H1 (cell line): ENCODE measurements at regions of chr3 and their contacts with region 1.

Region 1: GRCh38 chr3:36868614-36869436 is 76.0 kb downstream of the TRANK1 start:
- DNase-seq: peak; percentile 23 to 67
- H3K4me3 ChIP-seq: no peak overlapping the region
- H3K27ac ChIP-seq: no peak overlapping the region
- H3K4me1 ChIP-seq: peaks cover 0 to 3% (median 0%) of the 10 kb centered on the region in 4 experiments; a peak in 1 of 7 replicates
- H3K27me3 ChIP-seq: no peaks in the 10 kb centered on the region
- CTCF ChIP-seq: peak; percentile 8 to 88 (median 87)
- EP300 ChIP-seq: no peak
- POLR2A ChIP-seq: no peak
- RAD21 ChIP-seq: peak; percentile 89

Region 2: GRCh38 chr3:36729204-36730056 is 139.4 kb before region 1 on chr3:
- CTCF ChIA-PET with region 1: interaction called, 14 read pairs
- POLR2A ChIA-PET with region 1: interaction called, 3 read pairs
- DNase-seq: no peak
- H3K4me3 ChIP-seq: no peak overlapping the region
- H3K27ac ChIP-seq: no peak overlapping the region
- H3K4me1 ChIP-seq: no peaks in the 10 kb centered on the region
- H3K27me3 ChIP-seq: no peaks in the 10 kb centered on the region
- CTCF ChIP-seq: peak in 2 of 3 experiments; percentile 50 to 65; a peak in 2 of 4 replicates
- EP300 ChIP-seq: no peak
- POLR2A ChIP-seq: no peak
- RAD21 ChIP-seq: peak; percentile 87 to 92

Region 3: GRCh38 chr3:36741285-36741684 is 127.5 kb before region 1 on chr3:
- CTCF ChIA-PET with region 1: interaction called, 14 read pairs
- POLR2A ChIA-PET with region 1: no interaction called
- DNase-seq: no peak
- H3K4me3 ChIP-seq: no peak overlapping the region
- H3K27ac ChIP-seq: no peak overlapping the region
- H3K4me1 ChIP-seq: no peaks in the 10 kb centered on the region
- H3K27me3 ChIP-seq: no peaks in the 10 kb centered on the region
- CTCF ChIP-seq: peak; percentile 27 to 65 (median 51)
- EP300 ChIP-seq: no peak
- POLR2A ChIP-seq: no peak
- RAD21 ChIP-seq: peak; percentile 45 to 58

Region 4: GRCh38 chr3:36792342-36792741 is 76.5 kb before region 1 on chr3:
- CTCF ChIA-PET with region 1: interaction called, 85 read pairs
- POLR2A ChIA-PET with region 1: interaction called, 3 read pairs
- DNase-seq: peak; percentile 29 to 66
- H3K4me3 ChIP-seq: no peak overlapping the region
- H3K27ac ChIP-seq: no peak overlapping the region
- H3K4me1 ChIP-seq: no peaks in the 10 kb centered on the region
- H3K27me3 ChIP-seq: no peaks in the 10 kb centered on the region
- CTCF ChIP-seq: peak; percentile 73 to 91 (median 82)
- EP300 ChIP-seq: no peak
- POLR2A ChIP-seq: no peak
- RAD21 ChIP-seq: peak; percentile 90 to 95

Region 5: GRCh38 chr3:36823806-36824205 is 45.0 kb before region 1 on chr3:
- CTCF ChIA-PET with region 1: interaction called, 10 read pairs
- POLR2A ChIA-PET with region 1: interaction called, 3 read pairs
- DNase-seq: no peak
- H3K4me3 ChIP-seq: no peak overlapping the region
- H3K27ac ChIP-seq: no peak overlapping the region
- H3K4me1 ChIP-seq: peaks cover 0 to 4% (median 1%) of the 10 kb centered on the region in 4 experiments; a peak in 3 of 7 replicates
- H3K27me3 ChIP-seq: no peaks in the 10 kb centered on the region
- CTCF ChIP-seq: no peak
- EP300 ChIP-seq: no peak
- POLR2A ChIP-seq: no peak
- RAD21 ChIP-seq: no peak

Region 6: DNA sequence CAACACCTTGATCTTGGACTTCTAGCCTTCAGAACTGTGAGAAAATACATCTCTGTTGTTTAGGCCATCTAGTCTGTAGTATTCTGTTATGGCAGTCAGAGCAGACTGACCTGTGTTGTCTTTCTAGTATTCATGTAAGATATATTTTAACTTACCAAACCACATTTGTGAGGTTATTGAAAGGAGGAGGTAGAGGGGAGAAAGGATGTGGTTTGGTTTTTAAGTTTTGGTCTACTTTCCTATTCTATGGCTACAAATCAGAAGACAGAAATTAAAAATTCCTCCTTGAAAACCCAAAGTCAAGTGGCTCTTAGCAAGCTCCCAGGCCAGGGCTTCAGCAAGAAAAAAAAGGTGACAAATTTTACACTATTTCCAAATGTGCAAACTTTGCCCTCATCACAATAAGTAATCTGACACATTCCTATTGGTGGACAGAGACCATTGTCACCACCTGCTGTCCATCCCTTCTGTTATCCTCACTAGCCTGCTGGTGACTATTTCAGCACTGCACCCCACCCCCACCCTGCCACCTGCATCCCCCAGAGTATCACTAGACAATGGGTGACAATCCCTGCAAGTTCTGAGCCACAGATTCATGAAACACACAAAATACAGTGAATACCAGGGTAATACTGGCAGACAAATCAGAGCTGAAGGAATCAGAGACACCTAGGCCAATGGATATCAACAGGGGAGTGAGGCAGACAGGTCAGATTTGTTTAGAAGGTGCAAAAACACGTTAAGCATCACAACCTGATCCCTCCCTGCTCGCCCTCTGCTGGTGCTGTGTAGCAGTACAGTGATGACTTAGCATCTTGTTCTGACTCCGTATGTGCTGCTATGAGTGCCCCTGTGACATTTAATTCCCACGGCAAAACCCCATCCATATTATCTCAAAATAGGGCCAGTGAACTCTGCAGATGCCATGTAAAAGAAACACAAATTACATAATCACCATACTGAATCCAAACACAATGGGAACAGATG is 25.5 kb before region 1 on chr3:
- CTCF ChIA-PET with region 1: interaction called, 33 read pairs
- POLR2A ChIA-PET with region 1: no interaction called
- DNase-seq: peak; percentile 69 to 79
- H3K4me3 ChIP-seq: no peak overlapping the region
- H3K27ac ChIP-seq: no peak overlapping the region
- H3K4me1 ChIP-seq: no peaks in the 10 kb centered on the region
- H3K27me3 ChIP-seq: no peaks in the 10 kb centered on the region
- CTCF ChIP-seq: peak; percentile 80 to 99 (median 90)
- EP300 ChIP-seq: no peak
- POLR2A ChIP-seq: no peak
- RAD21 ChIP-seq: peak; percentile 63 to 68